ENCODE measurements at regions of chr1 and their contacts with region 1.

Region 1: GRCh38 chr1:178166429-178167024 is 72.6 kb downstream of the RASAL2 start:
- DNase-seq: no peak
- H3K4me3 ChIP-seq: no peak overlapping the region
- H3K27ac ChIP-seq: no peak overlapping the region
- H3K4me1 ChIP-seq: peaks cover 11% of the 10 kb centered on the region
- H3K27me3 ChIP-seq: no peaks in the 10 kb centered on the region
- CTCF ChIP-seq: no peak

Region 2: DNA sequence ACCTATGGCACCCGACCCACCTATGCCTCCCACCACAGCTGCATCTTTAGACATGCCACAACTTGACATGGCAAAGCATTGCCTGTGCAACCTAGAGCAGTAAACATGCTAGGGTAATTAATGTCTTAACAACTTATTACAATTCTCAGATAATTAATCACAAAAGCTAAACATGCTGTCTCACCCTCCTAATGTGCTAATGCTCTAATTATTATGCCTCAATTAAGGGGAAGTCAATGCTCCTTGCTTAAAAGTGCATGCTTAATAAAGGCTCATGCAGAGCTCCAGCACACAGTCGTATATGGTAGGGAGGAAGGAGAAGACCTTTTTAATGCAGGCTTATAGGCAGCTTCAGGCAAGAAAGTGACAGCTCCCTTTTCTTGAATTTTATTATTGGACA is 592.6 kb before region 1 on chr1:
- CTCF ChIA-PET with region 1: no interaction called
- dilution Hi-C with region 1: no loop called
- in situ Hi-C with region 1: no loop called
- intact Hi-C with region 1: no loop called
- DNase-seq: no peak
- H3K4me3 ChIP-seq: no peak overlapping the region
- H3K27ac ChIP-seq: no peak overlapping the region
- H3K4me1 ChIP-seq: no peaks in the 10 kb centered on the region
- H3K27me3 ChIP-seq: no peaks in the 10 kb centered on the region
- CTCF ChIP-seq: no peak

Region 3: DNA sequence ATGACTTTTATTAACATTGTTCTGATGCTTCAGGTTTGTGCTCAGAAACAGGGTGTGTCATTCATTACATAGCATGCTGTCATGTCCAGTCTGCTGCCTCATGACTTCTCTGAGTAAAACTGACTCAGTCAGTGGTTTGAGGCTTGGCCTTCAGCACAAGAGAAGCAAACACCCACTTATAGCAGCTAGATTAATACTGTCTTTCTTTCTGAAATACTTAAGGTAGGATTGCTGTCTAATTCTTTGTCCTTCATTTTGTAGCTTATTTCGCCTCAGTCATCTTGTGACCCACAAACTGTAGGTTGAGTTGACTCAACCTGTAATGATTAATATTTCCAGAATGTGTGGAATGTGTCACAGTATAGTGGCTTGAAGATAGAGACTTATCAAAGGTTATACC is 39.7 kb before region 1 on chr1:
- CTCF ChIA-PET with region 1: no interaction called
- dilution Hi-C with region 1: no loop called
- in situ Hi-C with region 1: no loop called
- intact Hi-C with region 1: loop called (anchors 2 kb)
- DNase-seq: peak; percentile 97
- H3K4me3 ChIP-seq: peak overlapping the region in 1 of 3 experiments; percentile 50
- H3K27ac ChIP-seq: peak overlapping the region; percentile 99
- H3K4me1 ChIP-seq: peaks cover 55% of the 10 kb centered on the region
- H3K27me3 ChIP-seq: no peaks in the 10 kb centered on the region
- CTCF ChIP-seq: no peak

Region 4: DNA sequence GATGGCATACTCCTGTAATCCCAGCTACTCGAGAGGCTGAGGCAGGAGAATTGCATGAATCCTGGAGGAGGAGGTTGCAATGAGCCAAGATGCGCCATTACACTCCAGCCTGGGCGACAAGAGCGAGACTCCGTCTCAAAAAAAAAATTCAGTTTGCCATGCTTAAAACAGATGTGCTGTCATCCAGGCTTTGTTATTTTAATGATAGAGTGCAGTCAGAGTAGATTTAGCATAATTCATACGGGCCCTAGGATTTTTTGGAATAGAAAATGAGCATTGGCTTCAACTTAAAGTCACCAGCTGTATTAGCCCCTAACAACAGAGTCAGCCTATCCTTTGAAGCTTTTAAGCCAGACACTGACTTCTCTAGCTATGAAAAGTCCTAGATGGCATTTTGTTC is 52.0 kb after region 1 on chr1:
- CTCF ChIA-PET with region 1: no interaction called
- dilution Hi-C with region 1: no loop called
- in situ Hi-C with region 1: no loop called
- intact Hi-C with region 1: no loop called
- DNase-seq: no peak
- H3K4me3 ChIP-seq: no peak overlapping the region
- H3K27ac ChIP-seq: no peak overlapping the region
- H3K4me1 ChIP-seq: peaks cover 11% of the 10 kb centered on the region
- H3K27me3 ChIP-seq: no peaks in the 10 kb centered on the region
- CTCF ChIP-seq: no peak